H1 (cell line): ENCODE measurements at regions of chr3 and their contacts with region 1.

Region 1: DNA sequence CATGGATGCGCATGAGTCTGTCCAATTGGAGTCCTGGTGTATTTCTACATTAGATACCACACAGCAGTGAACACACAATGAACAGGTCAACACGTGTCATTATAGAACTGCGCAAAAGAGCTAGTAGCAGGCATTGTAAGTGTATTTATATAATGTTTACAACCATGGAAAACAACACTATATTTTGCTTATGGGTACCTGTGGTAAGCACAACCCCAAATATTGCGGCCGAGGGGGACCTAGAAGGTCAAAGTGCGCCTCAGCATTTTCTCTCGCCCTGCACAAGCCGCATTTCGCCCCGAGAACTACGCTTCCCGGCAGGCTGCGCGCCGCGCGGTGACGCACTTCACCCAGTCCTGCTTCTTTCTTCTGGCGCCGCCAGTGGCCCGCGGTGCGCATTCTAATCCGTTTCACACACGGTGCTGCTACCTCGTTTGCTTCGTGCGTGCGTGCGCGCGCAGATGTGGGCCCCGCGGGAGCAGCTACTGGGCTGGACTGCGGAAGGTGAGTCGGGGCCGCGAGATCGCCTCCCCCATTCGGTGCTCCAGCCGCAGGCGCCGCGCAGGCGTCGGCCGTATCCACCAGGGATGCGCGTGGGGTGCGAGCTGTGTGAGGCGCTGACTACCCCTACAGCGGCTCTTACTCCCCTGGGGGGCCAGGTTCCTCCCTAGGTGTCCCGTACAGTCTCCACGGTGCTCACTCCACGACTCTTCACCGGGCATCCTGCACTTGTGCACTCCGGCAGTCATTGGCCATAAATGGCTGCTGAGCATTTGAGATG is at the start of gene ZNF589:
- DNase-seq: peak; percentile 82 to 90
- H3K4me3 ChIP-seq: peak within 1 kb of the TSS; percentile 92 to 98 (median 96)
- H3K27ac ChIP-seq: peak within 1 kb of the TSS; percentile 92
- H3K4me1 ChIP-seq: peaks cover 2 to 15% (median 8%) of the 10 kb centered on the region in 4 experiments; a peak in 5 of 7 replicates
- H3K27me3 ChIP-seq: no peaks in the 10 kb centered on the region
- CTCF ChIP-seq: peak in 2 of 3 experiments; percentile 15 to 22; a peak in 2 of 4 replicates
- EP300 ChIP-seq: 0 out of 3 replicates have a peak, but pooled peaks of 1 of the 2 experiments have one; percentile 7
- POLR2A ChIP-seq: peak; percentile 89 to 97
- RAD21 ChIP-seq: no peak
- total RNA-seq, gene ZNF589: 106 and 113 TPM in 2 replicates

Region 2: DNA sequence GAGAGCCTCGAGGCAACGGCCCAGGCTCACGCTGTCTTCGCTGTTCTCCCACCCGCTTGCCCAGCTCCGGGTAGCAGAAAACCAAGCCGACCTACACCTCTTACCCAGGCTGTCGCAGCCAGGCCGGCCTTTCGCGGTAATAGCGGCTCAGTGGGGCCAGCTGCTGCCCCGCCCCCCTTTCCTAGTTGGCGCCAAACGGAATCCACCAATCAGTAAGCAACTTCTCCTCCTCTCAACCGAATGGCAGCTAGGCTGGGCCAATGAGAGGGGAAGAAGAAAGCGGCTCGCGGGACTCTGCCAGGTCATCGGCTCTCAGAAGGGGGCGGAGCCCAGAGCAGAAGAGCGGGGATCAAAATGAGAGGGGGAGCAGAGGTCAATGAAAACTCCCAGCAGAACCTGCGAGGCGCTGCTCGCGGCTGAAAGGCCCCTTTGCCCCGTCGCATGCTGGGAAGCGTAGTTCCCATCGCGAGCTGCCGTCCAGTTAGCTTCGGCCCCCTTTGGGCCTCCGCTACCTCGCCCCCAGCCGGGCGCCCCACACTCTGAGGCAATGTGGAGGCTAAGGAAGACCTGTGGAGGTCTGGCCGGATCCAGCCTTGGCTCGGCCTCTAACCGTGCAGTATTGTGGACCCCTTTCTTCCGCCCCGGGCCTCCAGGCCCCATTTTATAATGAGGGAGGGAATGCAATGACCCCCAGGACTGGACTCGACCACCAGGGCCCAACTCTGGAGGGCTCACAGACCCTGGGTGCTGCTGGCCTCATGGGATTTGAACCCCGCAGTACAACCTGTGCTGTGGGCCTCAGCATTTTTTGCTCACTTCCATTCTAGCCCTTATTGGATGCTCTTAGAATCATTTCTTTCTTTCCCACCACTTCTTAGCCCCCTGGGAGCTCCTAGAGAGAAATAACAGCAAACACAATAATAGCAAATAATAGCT is 52.4 kb before region 1 on chr3 and contains the start of gene CDC25A:
- CTCF ChIA-PET with region 1: no interaction called
- POLR2A ChIA-PET with region 1: interaction called, 82 read pairs
- DNase-seq: peak; percentile 92 to 98
- H3K4me3 ChIP-seq: peak within 1 kb of the TSS; percentile 65 to 98 (median 87)
- H3K27ac ChIP-seq: peak within 1 kb of the TSS; percentile 74
- H3K4me1 ChIP-seq: peaks cover 0 to 12% (median 8%) of the 10 kb centered on the region in 4 experiments; a peak in 5 of 7 replicates
- H3K27me3 ChIP-seq: no peaks in the 10 kb centered on the region
- CTCF ChIP-seq: no peak
- EP300 ChIP-seq: no peak
- POLR2A ChIP-seq: peak; percentile 81 to 88
- RAD21 ChIP-seq: no peak
- total RNA-seq, gene CDC25A: 62.1 and 65.0 TPM in 2 replicates

Region 3: DNA sequence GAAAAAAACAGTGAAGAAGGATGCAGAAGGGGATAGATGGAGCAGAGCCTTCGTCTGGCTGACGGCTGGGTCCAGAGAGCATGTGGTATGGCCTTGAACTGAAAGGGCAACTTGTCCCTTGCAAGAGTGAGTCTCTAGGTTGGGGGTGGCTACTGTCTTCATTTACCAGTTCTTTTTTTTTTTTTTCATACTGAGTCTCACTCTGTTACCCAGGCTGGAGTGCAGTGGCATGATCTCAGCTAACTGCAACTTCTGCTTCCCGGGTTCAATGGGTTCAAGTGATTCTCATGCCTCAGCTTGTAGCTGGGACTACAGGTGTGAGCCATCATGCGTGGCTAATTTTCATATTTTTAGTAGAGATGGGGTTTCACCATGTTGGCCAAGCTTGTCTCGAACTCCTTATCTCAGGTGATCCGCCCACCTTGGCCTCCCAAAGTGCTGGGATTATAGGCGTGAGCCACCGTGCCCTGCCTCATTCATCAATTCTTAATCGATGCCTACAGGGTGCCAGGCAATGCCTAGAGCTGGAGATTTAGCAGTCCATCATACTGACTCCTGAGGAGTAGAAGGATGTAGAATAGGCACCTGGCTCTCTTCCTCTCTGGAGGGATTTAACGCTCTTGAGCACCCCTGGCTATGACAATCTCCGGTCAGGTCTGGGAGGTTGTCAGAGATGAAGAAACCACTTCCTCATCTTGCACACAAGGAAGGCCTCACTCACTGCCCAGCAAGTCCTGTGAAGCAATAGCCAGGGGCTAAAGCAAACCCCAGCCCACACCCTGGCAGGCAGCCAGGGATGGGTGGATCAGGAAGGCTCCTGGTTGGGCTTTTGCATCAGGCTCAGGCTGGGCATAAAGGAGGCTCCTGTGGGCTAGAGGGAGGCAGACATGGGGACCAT is 18.0 kb before region 1 on chr3 and contains the start of gene CAMP:
- CTCF ChIA-PET with region 1: interaction called, 5 read pairs
- POLR2A ChIA-PET with region 1: interaction called, 37 read pairs
- DNase-seq: no peak
- H3K4me3 ChIP-seq: no peak within 1 kb of the TSS
- H3K27ac ChIP-seq: no peak within 1 kb of the TSS
- H3K4me1 ChIP-seq: no peaks in the 10 kb centered on the region
- H3K27me3 ChIP-seq: peaks cover 0 to 2% (median 0%) of the 10 kb centered on the region in 4 experiments; a peak in 1 of 7 replicates
- CTCF ChIP-seq: no peak
- EP300 ChIP-seq: no peak
- POLR2A ChIP-seq: no peak
- RAD21 ChIP-seq: no peak
- total RNA-seq, gene CAMP: not detected in 2 replicates

Region 4: DNA sequence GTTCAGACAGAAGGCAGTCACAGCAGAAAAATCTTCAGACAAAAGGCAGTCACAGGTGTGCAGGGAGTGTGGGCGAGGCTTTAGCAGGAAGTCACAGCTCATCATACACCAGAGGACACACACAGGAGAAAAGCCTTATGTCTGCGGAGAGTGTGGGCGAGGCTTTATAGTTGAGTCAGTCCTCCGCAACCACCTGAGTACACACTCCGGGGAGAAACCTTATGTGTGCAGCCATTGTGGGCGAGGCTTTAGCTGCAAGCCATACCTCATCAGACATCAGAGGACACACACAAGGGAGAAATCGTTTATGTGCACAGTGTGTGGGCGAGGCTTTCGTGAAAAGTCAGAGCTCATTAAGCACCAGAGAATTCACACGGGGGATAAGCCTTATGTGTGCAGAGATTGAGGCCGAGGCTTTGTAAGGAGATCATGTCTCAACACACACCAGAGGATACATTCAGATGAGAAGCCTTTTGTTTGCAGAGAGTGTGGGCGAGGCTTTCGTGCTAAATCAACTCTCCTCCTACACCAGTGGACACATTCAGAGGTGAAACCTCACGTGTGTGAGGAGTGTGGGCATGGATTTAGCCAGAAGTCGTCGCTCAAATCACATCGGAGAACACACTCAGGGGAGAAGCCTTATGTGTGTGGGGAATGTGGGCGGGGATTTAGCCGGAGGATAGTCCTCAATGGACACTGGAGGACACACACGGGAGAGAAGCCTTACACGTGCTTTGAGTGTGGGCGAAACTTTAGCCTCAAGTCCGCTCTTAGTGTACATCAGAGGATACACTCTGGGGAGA is 27.7 kb after region 1 on chr3:
- CTCF ChIA-PET with region 1: interaction called, 4 read pairs
- POLR2A ChIA-PET with region 1: interaction called, 19 read pairs
- DNase-seq: no peak
- H3K4me3 ChIP-seq: no peak overlapping the region
- H3K27ac ChIP-seq: no peak overlapping the region
- H3K4me1 ChIP-seq: no peaks in the 10 kb centered on the region; a peak in 2 of 7 replicates
- H3K27me3 ChIP-seq: no peaks in the 10 kb centered on the region
- CTCF ChIP-seq: no peak
- EP300 ChIP-seq: no peak
- POLR2A ChIP-seq: no peak
- RAD21 ChIP-seq: no peak

Region 5: DNA sequence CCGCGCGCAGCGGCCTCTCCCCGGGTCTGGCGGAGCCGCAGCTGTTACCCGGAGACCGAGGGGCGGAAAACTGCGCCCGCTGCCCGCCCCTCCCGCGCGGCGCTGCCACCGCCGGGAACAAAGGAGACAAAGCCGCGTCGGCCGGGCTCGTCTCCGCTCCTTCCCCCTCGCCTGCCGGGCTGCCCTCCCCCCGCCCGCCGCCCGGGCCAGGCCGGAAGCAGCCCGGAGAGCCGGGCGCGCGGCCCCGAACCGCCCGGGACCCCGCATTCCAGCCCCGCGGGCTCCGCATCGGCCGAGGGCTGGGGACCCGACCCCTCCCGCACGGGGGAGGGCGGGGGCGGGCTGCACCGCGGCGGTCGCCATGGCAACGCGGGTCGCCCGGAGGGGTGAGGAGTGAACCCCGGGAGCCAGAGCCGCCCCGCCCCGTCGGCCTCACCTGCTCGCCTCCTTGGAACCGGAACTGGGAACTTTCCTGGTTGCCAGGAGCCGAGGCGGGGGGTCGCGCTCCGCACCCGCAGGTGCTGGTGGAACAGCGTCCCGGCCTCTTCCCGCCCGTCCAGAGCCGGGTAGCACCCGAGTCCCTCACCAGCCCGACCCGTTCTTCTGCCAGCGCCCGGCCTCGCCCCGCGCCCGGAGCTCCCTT is 188.5 kb after region 1 on chr3:
- CTCF ChIA-PET with region 1: no interaction called
- POLR2A ChIA-PET with region 1: interaction called, 19 read pairs
- DNase-seq: peak in 1 of 2 experiments; percentile 90
- H3K4me3 ChIP-seq: peak overlapping the region; percentile 66 to 85 (median 76)
- H3K27ac ChIP-seq: peak overlapping the region; percentile 94
- H3K4me1 ChIP-seq: peaks cover 7 to 37% (median 22%) of the 10 kb centered on the region in 4 experiments
- H3K27me3 ChIP-seq: no peaks in the 10 kb centered on the region
- CTCF ChIP-seq: no peak
- EP300 ChIP-seq: no peak
- POLR2A ChIP-seq: peak in 1 of 2 experiments; percentile 55; a peak in 2 of 3 replicates
- RAD21 ChIP-seq: no peak